ENCODE measurements at regions of chr6 and their contacts with region 1.

Region 1: DNA sequence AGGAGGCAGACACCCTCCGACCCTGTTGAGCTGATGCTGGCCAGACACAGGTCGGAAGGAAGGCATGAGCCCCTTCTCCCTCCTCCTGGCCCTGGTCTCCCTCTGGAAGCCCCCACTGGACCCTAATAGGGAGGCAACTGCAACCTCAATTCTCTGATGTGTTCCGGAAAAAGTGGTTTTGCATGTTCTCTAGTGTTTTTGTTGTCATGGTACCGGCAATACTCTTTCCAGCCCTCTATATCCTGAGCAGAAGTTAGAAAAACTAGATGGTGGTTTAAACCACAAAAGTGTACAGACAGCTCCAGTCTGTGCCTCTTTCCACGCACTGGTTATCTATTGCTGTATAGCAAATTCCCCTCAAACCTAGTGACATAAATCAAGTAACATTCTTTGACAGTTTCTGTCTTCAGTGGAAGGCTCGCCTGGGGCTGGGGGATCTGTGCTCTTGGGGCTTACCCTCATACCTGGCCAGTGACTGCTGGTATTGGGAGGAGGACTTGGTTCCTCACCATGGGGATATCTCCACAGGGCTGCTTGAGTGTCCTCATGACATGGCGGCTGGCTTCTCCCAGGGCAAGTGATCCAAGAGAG is 37.0 kb downstream of the SYTL3 start:
- DNase-seq: peak in 33 of 35 experiments; percentile 21 to 89 (median 61)
- ATAC-seq: peak; percentile 82 to 94 (median 93)
- H3K4me3 ChIP-seq: peak overlapping the region; percentile 14 to 29
- H3K4me3 Mint-ChIP-seq: peak overlapping the region; percentile 26 to 73 (median 28)
- H3K27ac ChIP-seq: peak overlapping the region; percentile 94
- H3K27ac Mint-ChIP-seq: peak overlapping the region; percentile 87 to 93
- H3K4me1 ChIP-seq: peaks cover 39 to 53% of the 10 kb centered on the region in 2 experiments
- H3K4me1 Mint-ChIP-seq: peaks cover 67 to 72% (median 70%) of the 10 kb centered on the region in 3 donors
- H3K27me3 ChIP-seq: no peaks in the 10 kb centered on the region
- H3K27me3 Mint-ChIP-seq: no peaks in the 10 kb centered on the region

Region 2: DNA sequence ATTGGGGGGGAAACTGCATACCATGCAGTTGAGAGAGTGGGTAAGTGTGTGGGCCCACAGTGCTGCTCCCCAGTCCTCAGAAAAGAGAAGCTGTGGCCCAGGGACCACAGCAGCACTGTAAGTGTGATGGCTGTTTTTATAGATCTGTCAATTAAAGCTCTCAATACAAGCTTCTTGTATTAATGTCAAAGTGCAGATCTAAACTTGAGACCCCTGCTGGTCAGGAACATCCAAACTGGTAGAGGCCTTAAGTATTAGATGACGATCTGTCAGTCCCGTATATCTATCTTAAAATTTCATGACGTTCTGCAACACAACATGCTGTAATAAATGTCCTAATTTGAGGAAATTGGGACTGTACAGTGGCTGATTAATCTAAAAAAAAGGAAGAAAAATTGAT is 299.9 kb before region 1 on chr6:
- CTCF ChIA-PET with region 1: no interaction called
- POLR2A ChIA-PET with region 1: no interaction called
- DNase-seq: peak in 7 of 35 experiments; percentile 2 to 46 (median 9)
- ATAC-seq: no peak
- H3K4me3 ChIP-seq: no peak overlapping the region
- H3K4me3 Mint-ChIP-seq: no peak overlapping the region
- H3K27ac ChIP-seq: no peak overlapping the region
- H3K27ac Mint-ChIP-seq: no peak overlapping the region
- H3K4me1 ChIP-seq: no peaks in the 10 kb centered on the region
- H3K4me1 Mint-ChIP-seq: peaks cover 13 to 21% (median 15%) of the 10 kb centered on the region in 3 donors
- H3K27me3 ChIP-seq: no peaks in the 10 kb centered on the region
- H3K27me3 Mint-ChIP-seq: no peaks in the 10 kb centered on the region

Region 3: GRCh38 chr6:158631678-158632537 is 55.0 kb before region 1 on chr6:
- CTCF ChIA-PET with region 1: interaction called, 3 to 12 read pairs
- POLR2A ChIA-PET with region 1: interaction called in 1 of 2 experiments, 7 read pairs
- DNase-seq: no peak
- ATAC-seq: no peak
- H3K4me3 ChIP-seq: no peak overlapping the region
- H3K4me3 Mint-ChIP-seq: no peak overlapping the region
- H3K27ac ChIP-seq: no peak overlapping the region
- H3K27ac Mint-ChIP-seq: peak overlapping the region; percentile 75 to 84
- H3K4me1 ChIP-seq: peaks cover 19 to 27% of the 10 kb centered on the region in 2 experiments
- H3K4me1 Mint-ChIP-seq: peaks cover 50 to 55% (median 52%) of the 10 kb centered on the region in 3 donors
- H3K27me3 ChIP-seq: no peaks in the 10 kb centered on the region
- H3K27me3 Mint-ChIP-seq: no peaks in the 10 kb centered on the region

Region 4: GRCh38 chr6:158649289-158650143 is 37.4 kb before region 1 on chr6 and contains the start of gene SYTL3:
- CTCF ChIA-PET with region 1: interaction called, 4 to 17 read pairs
- POLR2A ChIA-PET with region 1: interaction called, 4 to 28 read pairs
- DNase-seq: peak; percentile 31 to 98 (median 89)
- ATAC-seq: peak; percentile 43 to 70 (median 54)
- H3K4me3 ChIP-seq: peak within 1 kb of the TSS; percentile 5 to 35
- H3K4me3 Mint-ChIP-seq: peak within 1 kb of the TSS; percentile 65 to 74 (median 68)
- H3K27ac ChIP-seq: peak within 1 kb of the TSS; percentile 99
- H3K27ac Mint-ChIP-seq: peak within 1 kb of the TSS; percentile 95 to 99
- H3K4me1 ChIP-seq: peaks cover 30 to 71% of the 10 kb centered on the region in 2 experiments
- H3K4me1 Mint-ChIP-seq: peaks cover 63 to 79% (median 68%) of the 10 kb centered on the region in 3 donors
- H3K27me3 ChIP-seq: no peaks in the 10 kb centered on the region
- H3K27me3 Mint-ChIP-seq: no peaks in the 10 kb centered on the region
- total RNA-seq, gene SYTL3: 14.4 to 45.6 (median 22.9) TPM

Region 5: GRCh38 chr6:158704181-158704822 is 17.4 kb after region 1 on chr6:
- CTCF ChIA-PET with region 1: interaction called, 4 to 16 read pairs
- POLR2A ChIA-PET with region 1: interaction called, 3 read pairs
- DNase-seq: peak in 34 of 35 experiments; percentile 33 to 88 (median 69)
- ATAC-seq: peak; percentile 93 to 98 (median 97)
- H3K4me3 ChIP-seq: peak overlapping the region; percentile 48 to 53
- H3K4me3 Mint-ChIP-seq: peak overlapping the region; percentile 72 to 74 (median 73)
- H3K27ac ChIP-seq: peak overlapping the region; percentile 32
- H3K27ac Mint-ChIP-seq: peak overlapping the region; percentile 52 to 72
- H3K4me1 ChIP-seq: peaks cover 0 to 16% of the 10 kb centered on the region in 2 experiments
- H3K4me1 Mint-ChIP-seq: peaks cover 9 to 17% (median 15%) of the 10 kb centered on the region in 3 donors
- H3K27me3 ChIP-seq: no peaks in the 10 kb centered on the region
- H3K27me3 Mint-ChIP-seq: no peaks in the 10 kb centered on the region

Region 6: DNA sequence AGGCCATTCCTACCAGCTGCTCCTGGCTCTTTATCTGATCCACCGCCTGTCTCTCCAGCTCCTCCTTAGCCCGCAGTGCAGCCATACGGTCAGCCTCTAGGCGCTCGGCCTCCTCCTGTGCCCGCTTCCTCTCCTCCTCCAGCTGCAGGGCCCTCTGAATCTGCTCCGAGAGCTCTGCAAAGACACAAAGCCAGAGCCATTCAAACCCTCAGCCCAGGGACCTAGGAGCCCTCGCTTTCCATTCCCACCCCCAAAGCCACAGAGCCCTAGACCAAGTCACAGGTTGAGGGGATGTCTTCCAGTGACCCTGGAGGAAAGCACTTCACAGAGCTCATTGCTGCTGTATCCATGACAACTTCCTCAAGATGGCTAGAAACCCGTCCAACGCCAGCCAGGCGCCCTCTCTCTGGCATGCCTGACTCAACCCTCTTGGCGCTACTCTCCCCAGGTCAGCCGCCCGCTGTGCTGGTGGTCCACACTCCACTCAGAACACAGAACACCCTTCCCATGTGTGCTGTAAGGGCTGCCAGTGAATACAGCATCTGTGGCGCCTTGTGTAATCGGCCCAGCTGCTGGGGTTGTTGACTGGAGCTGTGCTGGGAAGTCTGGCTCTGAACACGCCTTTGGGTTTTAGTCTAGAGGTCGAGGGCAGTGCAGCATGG is 83.0 kb after region 1 on chr6:
- CTCF ChIA-PET with region 1: no interaction called
- POLR2A ChIA-PET with region 1: no interaction called
- DNase-seq: no peak
- ATAC-seq: no peak
- H3K4me3 ChIP-seq: no peak overlapping the region
- H3K4me3 Mint-ChIP-seq: peak overlapping the region in 1 of 3 donors; percentile 8
- H3K27ac ChIP-seq: peak overlapping the region; percentile 13
- H3K27ac Mint-ChIP-seq: peak overlapping the region; percentile 66 to 91
- H3K4me1 ChIP-seq: peaks cover 8 to 43% of the 10 kb centered on the region in 2 experiments
- H3K4me1 Mint-ChIP-seq: peaks cover 43 to 45% (median 43%) of the 10 kb centered on the region in 3 donors
- H3K27me3 ChIP-seq: no peaks in the 10 kb centered on the region
- H3K27me3 Mint-ChIP-seq: no peaks in the 10 kb centered on the region

Region 7: DNA sequence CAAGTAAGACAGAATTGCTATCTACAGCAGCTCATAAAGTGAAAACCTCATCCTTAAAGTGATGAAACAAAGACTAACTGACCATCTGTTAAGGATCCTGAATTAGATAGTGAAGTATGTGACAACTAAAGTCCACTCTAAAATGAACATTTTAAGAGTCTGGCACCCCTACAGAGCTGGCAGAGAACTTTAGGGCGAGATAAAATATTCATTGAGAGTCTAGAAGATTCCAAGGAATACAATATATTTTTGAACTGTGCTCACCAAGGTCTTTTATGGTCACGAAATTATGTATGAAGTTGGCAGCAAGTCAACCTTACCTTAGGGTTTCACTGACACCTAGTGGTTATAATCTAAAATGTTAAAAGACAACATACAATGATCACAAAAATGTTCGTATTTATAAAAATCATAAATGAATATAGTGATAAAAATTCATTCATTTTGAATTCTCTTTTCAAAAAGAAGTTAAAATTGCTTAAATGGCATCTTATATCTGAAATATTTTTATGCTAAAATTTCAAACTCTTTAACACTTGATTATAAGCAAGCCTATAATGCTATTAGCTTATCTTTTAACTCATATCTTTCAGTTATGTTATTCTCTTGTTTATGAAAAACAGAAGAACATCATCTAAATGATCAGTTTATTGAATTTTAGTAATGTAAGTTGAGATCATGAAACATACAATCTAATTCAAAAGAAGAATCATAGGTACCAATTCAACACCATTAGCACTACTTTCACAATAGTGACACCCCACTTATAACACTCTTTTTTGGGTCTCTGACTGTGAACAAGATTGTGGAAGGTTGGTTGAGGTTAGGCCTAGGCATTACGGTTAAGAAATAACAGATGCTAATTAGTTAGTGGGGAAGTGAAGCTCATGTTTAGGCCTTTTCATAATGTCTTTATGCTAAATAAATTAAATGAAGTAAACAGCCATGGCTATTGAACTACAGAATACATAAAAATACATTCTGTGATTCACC is 285.7 kb after region 1 on chr6:
- CTCF ChIA-PET with region 1: interaction called in 1 of 2 experiments, 18 read pairs
- POLR2A ChIA-PET with region 1: no interaction called
- DNase-seq: peak in 2 of 35 experiments; percentile 7 to 78
- ATAC-seq: peak; percentile 43 to 70 (median 63)
- H3K4me3 ChIP-seq: no peak overlapping the region
- H3K4me3 Mint-ChIP-seq: no peak overlapping the region
- H3K27ac ChIP-seq: no peak overlapping the region
- H3K27ac Mint-ChIP-seq: no peak overlapping the region
- H3K4me1 ChIP-seq: no peaks in the 10 kb centered on the region
- H3K4me1 Mint-ChIP-seq: peaks cover 0 to 2% (median 0%) of the 10 kb centered on the region in 3 donors
- H3K27me3 ChIP-seq: no peaks in the 10 kb centered on the region
- H3K27me3 Mint-ChIP-seq: no peaks in the 10 kb centered on the region

Measured in T-cell (primary cell).